ENCODE measurements at regions of chr1 and their contacts with region 1.

Region 1: DNA sequence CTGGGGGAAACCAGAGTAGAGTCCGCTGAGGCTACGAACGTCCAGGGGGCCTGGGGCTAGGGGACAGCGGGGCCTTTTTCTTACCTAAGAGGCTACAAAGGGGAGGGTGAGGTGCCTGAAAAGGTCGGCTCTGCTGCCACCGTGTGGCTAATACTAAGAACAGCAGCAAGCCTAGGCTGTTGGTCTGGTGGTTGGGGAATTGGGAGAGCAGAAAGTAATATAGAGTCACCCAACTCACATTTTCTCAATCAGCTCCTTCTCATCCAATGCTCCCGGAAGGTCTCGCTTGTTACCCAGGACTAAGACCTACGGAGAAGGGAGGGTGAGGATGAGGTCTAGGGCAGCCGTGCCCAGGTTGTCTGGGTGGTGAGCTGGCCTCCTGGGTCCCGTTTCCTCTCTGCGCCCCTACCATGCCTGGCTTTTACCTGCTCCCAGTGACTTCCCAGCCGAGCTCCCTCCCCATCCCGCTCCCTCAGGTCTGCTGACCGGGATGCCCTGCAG is 9.3 kb downstream of the ARL8A start:
- DNase-seq: peak; percentile 62
- ATAC-seq: peak; percentile 77
- H3K4me3 Mint-ChIP-seq: no peak overlapping the region
- H3K27ac Mint-ChIP-seq: peak overlapping the region; percentile 60; the same call in 1 of the 2 replicates
- H3K4me1 Mint-ChIP-seq: peaks cover 23% of the 10 kb centered on the region
- H3K27me3 Mint-ChIP-seq: no peaks in the 10 kb centered on the region
- CTCF ChIP-seq: peak; percentile 75

Region 2: GRCh38 chr1:202105539-202106276 is 29.6 kb before region 1 on chr1:
- CTCF ChIA-PET with region 1: interaction called, 14 read pairs
- POLR2A ChIA-PET with region 1: no interaction called
- DNase-seq: peak; percentile 83
- ATAC-seq: peak; percentile 90
- H3K4me3 Mint-ChIP-seq: peak overlapping the region; percentile 28
- H3K27ac Mint-ChIP-seq: peak overlapping the region; percentile 94
- H3K4me1 Mint-ChIP-seq: peaks cover 42% of the 10 kb centered on the region
- H3K27me3 Mint-ChIP-seq: no peaks in the 10 kb centered on the region
- CTCF ChIP-seq: no peak

Region 3: DNA sequence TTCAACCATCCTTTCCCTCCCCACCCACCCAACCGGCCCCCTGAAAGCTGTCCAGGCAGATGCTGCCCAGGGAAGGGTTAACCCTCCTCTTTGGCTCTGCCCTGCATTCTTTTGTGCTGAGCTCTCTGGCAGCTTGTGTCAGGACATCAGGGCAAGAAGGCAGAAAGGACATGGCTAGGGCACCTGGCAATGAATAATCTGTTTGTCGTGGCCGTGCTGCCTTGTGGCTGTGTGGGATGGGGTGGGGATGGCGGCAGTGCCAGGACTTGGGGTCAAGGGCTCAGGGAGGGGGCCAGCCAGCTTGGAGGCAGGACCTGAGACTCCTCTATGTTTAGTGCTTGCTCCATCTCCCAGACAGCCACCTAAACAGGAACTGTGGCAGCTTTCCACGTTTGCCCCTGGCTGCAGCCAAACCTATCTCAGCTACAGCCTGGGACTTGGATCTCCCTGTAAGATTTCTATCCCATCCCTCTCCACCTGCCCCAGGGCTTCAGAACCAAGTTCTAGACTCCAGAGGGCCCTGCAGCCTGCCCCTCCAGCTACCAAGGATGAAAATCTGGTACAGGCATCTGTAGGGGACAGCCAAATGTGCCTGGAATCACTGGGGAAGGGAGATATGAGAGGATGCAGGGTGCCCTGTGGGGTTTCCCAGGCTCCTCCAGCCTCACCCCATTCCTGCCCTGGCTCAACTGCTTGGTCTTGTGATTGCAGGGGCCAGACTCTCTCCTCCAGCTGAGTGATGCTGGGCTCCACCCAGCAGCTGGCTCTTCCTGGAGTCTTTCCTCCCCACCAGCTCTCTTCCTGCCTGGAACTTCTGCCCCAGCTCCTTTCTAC is 22.2 kb before region 1 on chr1:
- CTCF ChIA-PET with region 1: interaction called, 26 read pairs
- POLR2A ChIA-PET with region 1: no interaction called
- DNase-seq: no peak
- ATAC-seq: no peak; the same call in none of the 2 replicates
- H3K4me3 Mint-ChIP-seq: no peak overlapping the region
- H3K27ac Mint-ChIP-seq: no peak overlapping the region
- H3K4me1 Mint-ChIP-seq: peaks cover 25% of the 10 kb centered on the region
- H3K27me3 Mint-ChIP-seq: no peaks in the 10 kb centered on the region
- CTCF ChIP-seq: no peak

Region 4: DNA sequence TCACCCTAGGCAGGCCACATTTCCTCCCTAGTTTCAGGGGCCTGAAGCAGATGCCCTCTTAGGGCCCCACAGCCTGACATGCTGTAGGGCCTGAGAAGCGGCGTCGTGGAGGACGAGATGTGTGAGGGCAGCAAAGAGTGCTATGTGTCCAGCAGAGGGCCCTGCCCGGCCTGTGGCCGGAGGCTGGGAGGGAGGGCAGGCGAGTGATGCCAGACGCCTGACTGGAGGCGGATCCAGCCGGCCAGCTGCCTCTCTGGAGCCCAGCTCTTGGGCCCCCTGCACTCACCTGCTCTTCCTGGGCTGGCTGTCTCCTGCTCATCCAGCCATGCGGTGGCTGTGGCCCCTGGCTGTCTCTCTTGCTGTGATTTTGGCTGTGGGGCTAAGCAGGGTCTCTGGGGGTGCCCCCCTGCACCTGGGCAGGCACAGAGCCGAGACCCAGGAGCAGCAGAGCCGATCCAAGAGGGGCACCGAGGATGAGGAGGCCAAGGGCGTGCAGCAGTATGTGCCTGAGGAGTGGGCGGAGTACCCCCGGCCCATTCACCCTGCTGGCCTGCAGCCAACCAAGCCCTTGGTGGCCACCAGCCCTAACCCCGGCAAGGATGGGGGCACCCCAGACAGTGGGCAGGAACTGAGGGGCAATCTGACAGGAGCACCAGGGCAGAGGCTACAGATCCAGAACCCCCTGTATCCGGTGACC is 12.5 kb before region 1 on chr1 and contains the start of gene GPR37L1:
- CTCF ChIA-PET with region 1: interaction called, 76 read pairs
- POLR2A ChIA-PET with region 1: no interaction called
- DNase-seq: peak; percentile 83
- ATAC-seq: peak; percentile 82
- H3K4me3 Mint-ChIP-seq: no peak within 1 kb of the TSS
- H3K27ac Mint-ChIP-seq: no peak within 1 kb of the TSS
- H3K4me1 Mint-ChIP-seq: peaks cover 9% of the 10 kb centered on the region
- H3K27me3 Mint-ChIP-seq: no peaks in the 10 kb centered on the region; the same call in 1 of the 2 replicates
- CTCF ChIP-seq: no peak
- total RNA-seq, gene GPR37L1: 0.07 to 0.16 TPM (median 0.09 TPM) in 3 replicates

Measured in WTC11 (cell line).